ENCODE measurements at regions of chr5 and their contacts with region 1.

Region 1: GRCh38 chr5:53335115-53335514 is 145.3 kb upstream of the FST start:
- DNase-seq: peak; percentile 49
- H3K4me3 Mint-ChIP-seq: no peak overlapping the region
- H3K27ac Mint-ChIP-seq: no peak overlapping the region
- H3K4me1 Mint-ChIP-seq: peaks cover 34% of the 10 kb centered on the region
- H3K27me3 Mint-ChIP-seq: no peaks in the 10 kb centered on the region
- CTCF ChIP-seq: peak; percentile 15

Region 2: DNA sequence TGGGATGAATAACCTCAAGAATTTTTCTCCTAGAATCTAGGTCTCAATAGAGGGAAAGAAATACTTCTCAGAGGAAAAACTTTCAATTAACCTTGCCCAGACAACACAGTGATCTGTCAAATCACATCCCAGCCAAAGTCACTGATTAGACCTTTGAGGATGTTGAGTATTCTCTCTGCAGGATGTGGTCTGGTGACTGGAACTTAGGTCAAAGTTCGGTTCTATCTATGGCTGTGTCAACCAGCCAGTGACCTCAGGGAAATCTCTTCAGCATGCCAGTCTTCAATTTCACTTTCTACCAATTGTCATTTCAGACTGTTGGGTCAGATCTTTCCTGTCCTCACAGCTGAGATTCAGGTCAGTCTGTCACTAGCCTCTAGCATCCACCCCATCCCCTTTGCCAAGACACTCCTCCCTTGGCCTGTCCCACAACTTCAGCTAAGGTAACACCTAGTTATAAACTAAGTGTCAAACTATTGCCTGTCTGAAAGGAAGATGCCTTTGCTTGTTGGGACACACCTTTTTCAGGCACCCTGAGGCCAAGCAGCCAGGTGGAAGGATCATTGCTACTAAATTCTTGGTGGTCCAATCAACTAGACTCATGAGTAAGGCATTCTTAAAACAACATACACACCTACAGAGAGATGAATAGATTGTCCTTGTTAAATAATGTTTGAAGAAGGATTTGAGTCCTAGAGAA is 11.0 kb before region 1 on chr5:
- CTCF ChIA-PET with region 1: interaction called, 6 read pairs
- POLR2A ChIA-PET with region 1: interaction called, 64 read pairs
- intact Hi-C with region 1: no loop called
- DNase-seq: peak; percentile 58
- H3K4me3 Mint-ChIP-seq: no peak overlapping the region
- H3K27ac Mint-ChIP-seq: no peak overlapping the region
- H3K4me1 Mint-ChIP-seq: peaks cover 30% of the 10 kb centered on the region
- H3K27me3 Mint-ChIP-seq: no peaks in the 10 kb centered on the region
- CTCF ChIP-seq: no peak

Measured in MCF 10A (cell line).